Lower leg skin (tissue), 4 donors: ENCODE measurements at regions of chr4 and their contacts with region 1.

Region 1: GRCh38 chr4:162675661-162676060 is 491.0 kb downstream of the NAF1 start:
- DNase-seq: no peak
- H3K4me3 ChIP-seq: no peak overlapping the region
- CTCF ChIP-seq: no peak
- POLR2A ChIP-seq: no peak

Region 2: DNA sequence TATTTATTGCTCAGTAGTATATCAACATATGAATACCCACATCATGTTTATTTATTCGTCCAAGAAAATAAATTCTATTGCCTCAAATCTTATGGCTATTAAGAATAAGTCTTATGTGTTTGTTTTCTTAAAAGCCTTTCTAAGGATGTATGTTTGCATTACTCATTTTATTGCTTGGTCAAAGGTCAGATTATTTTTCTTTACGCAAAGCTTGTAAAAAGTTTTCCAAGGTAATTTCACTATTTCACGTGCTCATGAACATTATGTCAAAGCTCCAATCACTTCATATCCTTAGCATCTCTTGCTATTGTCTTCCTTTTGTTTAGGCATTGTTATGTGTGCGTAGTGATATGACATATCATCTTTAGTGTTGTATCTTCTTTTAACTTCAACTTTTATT is 253.3 kb before region 1 on chr4:
- intact Hi-C with region 1: no loop called
- DNase-seq: no peak
- H3K4me3 ChIP-seq: no peak overlapping the region
- CTCF ChIP-seq: no peak
- POLR2A ChIP-seq: no peak

Region 3: DNA sequence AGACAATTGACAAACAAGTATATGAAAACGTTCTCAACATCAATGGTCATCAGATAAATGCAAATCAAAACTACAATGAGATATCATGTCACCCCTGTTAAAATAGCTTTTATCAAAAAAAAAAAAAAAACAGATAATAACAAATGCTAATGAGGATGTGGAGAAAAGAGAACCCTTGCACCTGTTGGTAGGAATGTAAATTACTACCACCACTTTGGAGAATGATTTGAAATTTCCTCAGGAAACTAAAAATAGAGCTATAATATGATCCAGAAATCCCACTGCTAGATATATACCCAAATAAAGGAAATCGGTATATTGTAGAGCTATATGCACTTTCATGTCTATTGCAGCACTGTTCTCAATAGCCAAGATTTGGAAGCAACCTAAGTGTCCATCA is 41.3 kb before region 1 on chr4:
- intact Hi-C with region 1: loop called (anchors 1 kb)
- DNase-seq: no peak
- H3K4me3 ChIP-seq: no peak overlapping the region
- CTCF ChIP-seq: no peak
- POLR2A ChIP-seq: no peak